Activated naive CD4-positive, alpha-beta T cell treated with anti-CD3 and anti-CD28 coated beads, Interleukin-2, amount 10 ng/mL, durations not matched to agents 7 days and 5 days (primary cell): ENCODE measurements at regions of chr12 and their contacts with region 1.

Region 1: GRCh38 chr12:89345830-89346740 is 6.2 kb downstream of the DUSP6 start:
- DNase-seq: peak; percentile 55
- H3K4me3 Mint-ChIP-seq: peak overlapping the region; percentile 66
- H3K27ac Mint-ChIP-seq: peak overlapping the region; percentile 89
- H3K4me1 Mint-ChIP-seq: peaks cover 62% of the 10 kb centered on the region
- H3K27me3 Mint-ChIP-seq: peaks cover 4% of the 10 kb centered on the region

Region 2: GRCh38 chr12:89040146-89040964 is 305.7 kb before region 1 on chr12:
- CTCF ChIA-PET with region 1: interaction called, 11 read pairs
- DNase-seq: peak; percentile 92
- H3K4me3 Mint-ChIP-seq: peak overlapping the region; percentile 10
- H3K27ac Mint-ChIP-seq: peak overlapping the region; percentile 91
- H3K4me1 Mint-ChIP-seq: peaks cover 59% of the 10 kb centered on the region
- H3K27me3 Mint-ChIP-seq: peaks cover 4% of the 10 kb centered on the region

Region 3: GRCh38 chr12:89162704-89163261 is 183.3 kb before region 1 on chr12:
- CTCF ChIA-PET with region 1: no interaction called
- DNase-seq: peak; percentile 50
- H3K4me3 Mint-ChIP-seq: no peak overlapping the region
- H3K27ac Mint-ChIP-seq: no peak overlapping the region
- H3K4me1 Mint-ChIP-seq: peaks cover 18% of the 10 kb centered on the region
- H3K27me3 Mint-ChIP-seq: no peaks in the 10 kb centered on the region

Region 4: GRCh38 chr12:89179245-89179644 is 166.8 kb before region 1 on chr12:
- CTCF ChIA-PET with region 1: no interaction called
- DNase-seq: no peak
- H3K4me3 Mint-ChIP-seq: no peak overlapping the region
- H3K27ac Mint-ChIP-seq: no peak overlapping the region
- H3K4me1 Mint-ChIP-seq: peaks cover 26% of the 10 kb centered on the region
- H3K27me3 Mint-ChIP-seq: no peaks in the 10 kb centered on the region

Region 5: GRCh38 chr12:89236748-89237388 is 109.2 kb before region 1 on chr12:
- CTCF ChIA-PET with region 1: no interaction called
- DNase-seq: no peak
- H3K4me3 Mint-ChIP-seq: no peak overlapping the region
- H3K27ac Mint-ChIP-seq: peak overlapping the region; percentile 9
- H3K4me1 Mint-ChIP-seq: peaks cover 85% of the 10 kb centered on the region
- H3K27me3 Mint-ChIP-seq: no peaks in the 10 kb centered on the region

Region 6: DNA sequence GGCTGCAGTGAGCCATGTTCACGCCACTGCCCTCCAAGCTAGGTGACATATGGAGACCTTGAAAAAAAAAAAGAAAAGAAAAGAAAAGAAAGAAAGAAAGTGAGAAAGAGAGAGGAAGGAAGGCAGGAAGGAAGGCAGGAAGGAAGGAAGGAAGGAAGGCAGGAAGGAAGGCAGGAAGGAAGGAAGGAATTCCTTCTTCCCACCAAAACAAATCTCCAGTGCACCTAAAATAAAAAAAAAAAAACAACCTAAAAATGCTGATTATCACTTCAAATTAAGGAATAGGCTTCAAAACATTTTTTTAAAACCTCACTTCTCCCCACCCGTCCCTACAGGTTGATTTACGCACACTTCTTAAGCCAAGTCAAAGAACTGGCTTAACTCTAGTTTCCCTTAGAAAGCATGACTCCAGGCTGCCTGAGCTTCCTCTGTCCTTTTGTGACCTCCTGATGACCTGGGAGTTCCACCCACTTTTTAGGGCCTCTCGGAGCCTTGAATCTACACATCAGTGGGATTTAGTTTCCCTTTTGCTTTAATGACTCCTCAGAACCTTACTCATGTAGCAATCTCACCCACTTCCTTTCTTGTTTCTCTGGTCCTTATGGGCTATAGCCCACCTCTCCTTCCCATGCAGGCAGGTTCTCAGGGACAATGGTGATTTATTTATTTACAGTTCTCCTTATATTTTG is 12.4 kb before region 1 on chr12:
- CTCF ChIA-PET with region 1: interaction called, 18 read pairs
- DNase-seq: peak; percentile 70
- H3K4me3 Mint-ChIP-seq: peak overlapping the region; percentile 26
- H3K27ac Mint-ChIP-seq: peak overlapping the region; percentile 5
- H3K4me1 Mint-ChIP-seq: peaks cover 35% of the 10 kb centered on the region
- H3K27me3 Mint-ChIP-seq: peaks cover under 1% of the 10 kb centered on the region